ENCODE measurements at regions of chr17 and their contacts with region 1.

Region 1: DNA sequence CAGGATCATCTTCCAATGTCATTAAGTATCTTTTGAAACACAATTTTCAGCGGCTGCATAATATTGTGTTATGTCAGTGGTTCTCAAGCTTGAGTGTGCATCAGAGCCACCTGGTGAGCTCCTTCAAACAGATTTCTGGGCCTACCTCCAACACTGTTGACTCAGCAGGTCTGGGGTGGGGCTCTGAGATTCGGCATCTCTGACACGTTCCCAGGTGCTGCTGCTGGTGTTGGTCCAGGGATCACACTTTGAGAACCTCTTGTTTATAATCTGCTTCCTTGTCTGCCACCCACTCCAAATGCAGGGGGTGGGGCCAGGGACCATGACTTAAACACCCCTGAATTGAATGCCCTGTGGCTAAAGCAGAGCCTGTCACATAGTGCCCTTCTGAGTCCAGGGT is 73.8 kb upstream of the HNF1B start:
- DNase-seq: peak; percentile 54
- H3K4me3 ChIP-seq: no peak overlapping the region
- H3K27ac ChIP-seq: no peak overlapping the region
- H3K4me1 ChIP-seq: no peaks in the 10 kb centered on the region
- H3K27me3 ChIP-seq: no peaks in the 10 kb centered on the region
- CTCF ChIP-seq: no peak
- POLR2A ChIP-seq: no peak

Region 2: GRCh38 chr17:37650419-37651003 is 168.2 kb before region 1 on chr17:
- intact Hi-C with region 1: loop called (anchors 10 kb)
- DNase-seq: no peak
- H3K4me3 ChIP-seq: no peak overlapping the region
- H3K27ac ChIP-seq: no peak overlapping the region
- H3K4me1 ChIP-seq: no peaks in the 10 kb centered on the region
- H3K27me3 ChIP-seq: no peaks in the 10 kb centered on the region
- CTCF ChIP-seq: peak in 2 of 4 experiments; percentile 37 to 40
- POLR2A ChIP-seq: no peak